Naive thymus-derived CD8-positive, alpha-beta T cell (primary cell): ENCODE measurements at regions of chr11 and their contacts with region 1.

Region 1: DNA sequence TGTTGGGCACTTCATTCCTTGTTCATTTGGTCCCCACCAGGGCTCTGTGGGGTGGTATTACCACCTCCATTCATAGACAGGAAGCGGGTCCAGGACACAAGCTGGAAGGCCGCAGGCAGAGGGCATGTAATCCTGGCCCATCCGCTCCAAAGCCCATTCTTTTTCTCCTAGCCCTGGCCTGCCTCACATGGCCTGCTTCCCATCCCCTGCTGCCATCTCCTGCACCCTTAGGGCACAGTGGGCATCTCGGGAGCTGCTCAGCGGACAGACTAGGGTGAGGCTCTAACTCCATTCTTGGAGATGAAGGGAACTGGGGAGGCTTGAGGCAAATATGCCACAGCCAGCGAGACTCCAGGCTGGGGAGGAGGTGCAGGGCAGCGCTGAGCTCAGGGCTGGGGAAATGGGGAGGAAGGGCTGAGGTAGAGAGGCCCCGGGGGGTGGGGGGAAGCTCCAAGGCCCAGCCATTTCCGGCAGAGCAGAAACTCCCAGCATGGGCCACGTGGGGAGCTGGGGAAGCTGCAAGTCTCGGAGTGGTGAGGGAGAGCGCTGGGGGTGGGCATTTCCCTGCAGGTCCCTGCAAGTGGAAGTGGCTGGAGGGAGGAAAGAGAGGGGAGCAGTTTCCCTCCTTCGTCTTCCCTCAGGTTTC is 14.3 kb upstream of the BCL9L start:
- DNase-seq: peak in 9 of 10 donors; percentile 29 to 69 (median 49)
- ATAC-seq: peak; percentile 92 to 95
- H3K4me3 Mint-ChIP-seq: peak overlapping the region in 9 of 10 donors; percentile 25 to 79 (median 64)
- H3K27ac Mint-ChIP-seq: peak overlapping the region in 6 of 10 donors; percentile 40 to 86 (median 77)
- H3K4me1 Mint-ChIP-seq: peaks cover 27 to 52% (median 47%) of the 10 kb centered on the region in 4 donors
- H3K27me3 Mint-ChIP-seq: no peaks in the 10 kb centered on the region

Region 2: GRCh38 chr11:118956094-118956846 is 16.2 kb after region 1 on chr11 and contains the start of gene UPK2:
- POLR2A ChIA-PET with region 1: interaction called, 10 read pairs
- DNase-seq: peak; percentile 77 to 93 (median 87)
- ATAC-seq: peak; percentile 99 to 100
- H3K4me3 Mint-ChIP-seq: peak within 1 kb of the TSS in 2 of 10 donors; percentile 4 to 30
- H3K27ac Mint-ChIP-seq: peak within 1 kb of the TSS in 8 of 10 donors; percentile 36 to 81 (median 59)
- H3K4me1 Mint-ChIP-seq: peaks cover 4 to 15% (median 11%) of the 10 kb centered on the region in 4 donors
- H3K27me3 Mint-ChIP-seq: peaks cover 0 to 11% (median 0%) of the 10 kb centered on the region in 5 donors
- polyA plus RNA-seq, gene UPK2: 0.22 TPM in 1 of 3 donors, not detected in the others